SK-N-SH (cell line): ENCODE measurements at regions of chr4 and their contacts with region 1.

Region 1: GRCh38 chr4:3047464-3048286 is 26.7 kb downstream of the HTT-AS start:
- DNase-seq: peak; percentile 60
- H3K4me3 ChIP-seq: peak overlapping the region in 1 of 2 experiments; percentile 19; a peak in 1 of 4 replicates
- H3K27ac ChIP-seq: no peak overlapping the region
- H3K4me1 ChIP-seq: no peaks in the 10 kb centered on the region; a peak in 1 of 4 replicates
- H3K27me3 ChIP-seq: no peaks in the 10 kb centered on the region
- CTCF ChIP-seq: peak; percentile 70
- EP300 ChIP-seq: no peak
- RAD21 ChIP-seq: peak; percentile 78

Region 2: DNA sequence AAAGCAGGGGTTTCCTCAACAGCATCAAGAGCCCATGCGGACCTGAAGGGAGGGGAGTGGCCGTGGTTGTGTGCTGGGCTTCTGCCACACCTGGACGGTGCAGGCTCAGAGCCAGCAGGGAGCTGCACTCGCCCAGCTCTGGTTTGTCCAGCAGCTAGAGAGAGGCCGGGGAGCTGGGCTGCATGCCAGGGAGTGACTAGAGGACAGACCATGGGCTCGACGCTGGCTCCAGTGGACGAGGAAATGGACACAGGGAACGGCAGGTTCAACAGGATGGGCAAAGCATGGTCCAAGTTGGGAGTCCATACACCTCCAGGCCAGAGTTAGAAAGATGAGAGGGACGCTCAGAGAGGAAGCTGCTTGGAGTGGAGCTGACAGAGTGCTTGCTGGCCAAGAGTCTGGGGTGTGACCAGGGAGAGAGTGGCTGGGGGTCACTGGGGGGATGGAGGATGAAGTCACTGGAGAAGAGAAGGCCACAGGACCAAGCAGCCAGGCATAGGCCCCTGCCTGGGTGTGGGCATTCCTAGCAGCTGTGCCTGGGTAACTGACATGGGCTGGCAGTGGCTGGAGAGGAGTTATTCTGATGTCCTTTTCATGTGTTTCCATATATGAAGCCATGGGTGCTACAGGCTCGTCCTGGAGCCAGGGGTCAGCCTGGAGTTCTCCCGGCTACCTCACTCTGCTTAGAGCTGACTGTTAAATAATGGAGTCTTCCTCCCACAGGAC is 16.2 kb before region 1 on chr4:
- CTCF ChIA-PET with region 1: interaction called, 16 read pairs
- POLR2A ChIA-PET with region 1: no interaction called
- DNase-seq: peak; percentile 53
- H3K4me3 ChIP-seq: no peak overlapping the region
- H3K27ac ChIP-seq: no peak overlapping the region
- H3K4me1 ChIP-seq: peaks cover 0 to 11% of the 10 kb centered on the region in 2 experiments; a peak in 1 of 4 replicates
- H3K27me3 ChIP-seq: no peaks in the 10 kb centered on the region
- CTCF ChIP-seq: no peak
- EP300 ChIP-seq: no peak
- RAD21 ChIP-seq: no peak